AG04449 (cell line): ENCODE measurements at regions of chr1 and their contacts with region 1.

Region 1: DNA sequence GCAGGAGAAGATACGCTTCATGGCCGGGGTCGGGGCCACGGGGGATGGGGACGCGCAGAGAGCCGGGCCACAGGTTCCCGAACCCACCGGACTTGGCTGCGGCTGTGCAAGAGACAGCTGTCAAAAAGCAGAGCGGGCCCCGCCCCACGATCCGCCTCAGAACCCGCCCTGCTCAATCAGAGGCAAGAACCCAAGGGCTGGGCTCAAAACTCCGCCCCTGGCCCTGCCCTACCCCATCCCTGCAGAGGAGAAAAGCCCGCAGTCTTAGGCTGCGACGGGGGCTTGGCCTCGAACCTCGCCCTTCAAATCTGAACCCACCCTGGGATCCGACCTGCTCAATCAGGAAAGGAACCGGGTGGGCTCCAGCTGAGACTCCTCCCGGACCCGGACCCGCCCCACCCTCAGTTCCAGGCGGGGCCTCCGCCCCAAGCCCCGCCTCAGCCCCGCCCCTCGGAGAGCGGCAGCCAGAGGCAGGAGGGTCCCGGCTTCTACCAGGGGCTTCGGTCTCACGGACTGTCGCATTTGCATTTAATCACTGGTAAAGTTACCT is at the start of gene ANKRD35:
- DNase-seq: no peak
- H3K4me3 ChIP-seq: peak within 1 kb of the TSS; percentile 74
- CTCF ChIP-seq: no peak

Region 2: GRCh38 chr1:145740266-145740665 is 145.5 kb before region 1 on chr1:
- CTCF ChIA-PET with region 1: no interaction called
- POLR2A ChIA-PET with region 1: no interaction called
- DNase-seq: peak; percentile 74
- H3K4me3 ChIP-seq: no peak overlapping the region
- CTCF ChIP-seq: no peak

Region 3: GRCh38 chr1:145751491-145752037 is 134.2 kb before region 1 on chr1:
- CTCF ChIA-PET with region 1: no interaction called
- POLR2A ChIA-PET with region 1: no interaction called
- DNase-seq: peak; percentile 84
- H3K4me3 ChIP-seq: no peak overlapping the region
- CTCF ChIP-seq: no peak

Region 4: DNA sequence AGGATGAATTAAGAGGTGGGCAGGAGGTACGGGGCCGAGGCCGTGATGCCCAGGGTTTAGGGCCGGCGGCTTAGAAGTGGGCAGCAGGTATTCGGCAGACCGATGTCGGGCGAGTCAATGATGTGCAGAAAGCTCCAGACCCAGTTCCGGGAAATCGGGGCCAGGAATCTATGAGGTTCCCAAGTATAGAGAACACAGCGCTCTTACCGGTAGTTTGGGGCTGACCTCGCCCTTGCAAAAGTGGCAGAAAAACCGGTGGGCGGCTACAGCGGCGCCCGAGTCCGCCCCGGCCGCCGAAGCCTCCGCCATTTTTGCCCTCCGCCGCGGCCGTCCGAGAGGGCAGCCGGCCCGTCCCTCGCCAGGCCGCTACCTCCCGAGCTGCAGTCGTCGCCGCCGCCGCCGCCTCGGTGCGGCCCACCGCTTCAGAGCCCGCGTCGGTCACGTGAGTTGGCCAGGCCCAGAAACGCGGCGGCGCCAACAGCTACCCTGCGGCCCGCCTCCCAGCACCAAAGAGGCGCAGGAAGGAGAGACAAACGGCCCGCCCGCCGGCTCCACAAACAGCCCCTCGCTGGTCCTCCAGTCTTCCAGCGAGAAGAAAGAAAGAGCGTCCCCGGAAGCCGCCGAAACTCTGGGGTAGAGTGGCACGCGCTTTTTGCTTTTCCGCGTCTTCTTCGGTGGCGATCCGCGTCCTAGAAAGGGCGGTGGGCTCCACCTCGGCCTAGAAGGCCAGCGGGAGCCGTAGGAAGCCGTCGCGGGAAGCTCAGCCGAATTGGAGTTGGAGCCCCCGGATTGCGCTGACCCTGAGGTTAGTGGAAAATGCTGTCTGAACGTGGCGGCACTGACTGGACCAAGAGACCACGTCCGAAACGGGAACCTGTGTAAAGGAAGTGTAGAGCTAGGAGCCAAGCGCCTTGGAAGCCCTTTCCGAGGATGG is 62.0 kb before region 1 on chr1 and contains the starts of genes POLR3C and RNF115:
- CTCF ChIA-PET with region 1: no interaction called
- POLR2A ChIA-PET with region 1: no interaction called
- DNase-seq: peak; percentile 36
- H3K4me3 ChIP-seq: peak within 1 kb of the TSS; percentile 82
- CTCF ChIP-seq: no peak

Region 5: GRCh38 chr1:145918144-145918992 is 32.6 kb after region 1 on chr1 and contains the start of gene PEX11B:
- CTCF ChIA-PET with region 1: interaction called, 469 read pairs
- POLR2A ChIA-PET with region 1: no interaction called
- DNase-seq: peak; percentile 40
- H3K4me3 ChIP-seq: peak within 1 kb of the TSS; percentile 95
- CTCF ChIP-seq: no peak